ENCODE measurements at regions of chr3 and their contacts with region 1.

Region 1: GRCh38 chr3:45037734-45038455 is 11.8 kb downstream of the CLEC3B start:
- DNase-seq: peak; percentile 84
- H3K4me3 Mint-ChIP-seq: no peak overlapping the region
- H3K27ac Mint-ChIP-seq: no peak overlapping the region
- H3K4me1 Mint-ChIP-seq: peaks cover 42% of the 10 kb centered on the region
- H3K27me3 Mint-ChIP-seq: peaks cover 30% of the 10 kb centered on the region

Region 2: GRCh38 chr3:43953814-43954692 is 1083.8 kb before region 1 on chr3:
- intact Hi-C with region 1: no loop called
- DNase-seq: no peak
- H3K4me3 Mint-ChIP-seq: no peak overlapping the region
- H3K27ac Mint-ChIP-seq: no peak overlapping the region
- H3K4me1 Mint-ChIP-seq: peaks cover 13% of the 10 kb centered on the region
- H3K27me3 Mint-ChIP-seq: peaks cover 23% of the 10 kb centered on the region

Region 3: DNA sequence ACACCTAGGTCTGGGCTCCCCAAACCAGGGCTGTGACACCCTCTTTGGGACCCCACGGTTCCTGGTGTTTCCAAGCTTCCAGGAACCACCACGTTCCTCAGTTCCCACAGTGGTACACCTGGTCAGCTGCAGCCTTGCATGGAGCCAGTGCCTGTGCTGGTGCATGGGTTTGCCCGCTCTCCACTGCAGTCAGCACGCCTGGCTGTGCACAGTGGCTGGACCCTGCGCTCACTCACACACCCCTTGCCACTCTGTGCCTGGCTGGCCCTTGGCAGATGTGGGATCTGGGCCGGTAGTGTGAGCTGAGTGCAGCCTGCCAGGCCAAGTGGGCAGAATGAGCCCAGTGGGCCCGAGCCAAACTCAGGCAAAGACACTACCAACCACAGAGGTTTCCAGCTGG is 650.5 kb before region 1 on chr3:
- intact Hi-C with region 1: no loop called
- DNase-seq: no peak
- H3K4me3 Mint-ChIP-seq: no peak overlapping the region
- H3K27ac Mint-ChIP-seq: no peak overlapping the region
- H3K4me1 Mint-ChIP-seq: no peaks in the 10 kb centered on the region
- H3K27me3 Mint-ChIP-seq: no peaks in the 10 kb centered on the region

Region 4: DNA sequence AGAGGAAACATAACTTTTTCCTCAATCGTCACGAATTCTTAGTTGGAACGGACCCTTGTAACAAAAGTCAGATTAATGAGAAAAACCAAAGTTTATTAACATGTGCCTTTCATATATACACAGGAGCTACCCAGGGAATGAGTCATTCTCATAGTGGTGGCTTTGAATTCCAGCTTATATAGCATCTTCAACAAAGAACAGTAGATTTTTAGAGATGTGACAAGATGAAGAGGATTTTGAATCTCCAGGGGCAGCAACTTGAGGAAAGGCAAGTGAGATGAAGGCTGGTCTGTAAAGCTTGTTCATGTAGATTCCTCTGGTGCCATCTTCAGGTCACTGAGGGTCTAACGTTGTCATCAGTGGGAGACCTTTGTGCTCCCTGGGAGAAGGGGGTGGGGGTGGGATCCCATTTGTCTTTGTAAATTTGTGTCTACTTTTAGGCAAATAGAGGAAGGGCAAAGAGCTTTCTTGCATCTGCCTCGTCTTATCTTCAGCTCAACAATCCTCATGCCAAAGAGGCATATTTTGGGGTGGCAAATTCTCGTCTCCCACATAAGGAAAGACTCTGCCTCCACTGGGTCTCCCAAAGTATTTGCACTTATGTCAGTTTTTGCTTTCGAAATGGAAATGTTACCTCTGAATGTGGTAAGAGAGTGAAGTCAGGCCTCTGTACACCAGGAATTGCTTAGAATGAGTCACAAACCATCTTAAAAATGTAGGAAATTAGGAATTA is 17.7 kb after region 1 on chr3:
- intact Hi-C with region 1: loop called (anchors 2 kb)
- DNase-seq: no peak
- H3K4me3 Mint-ChIP-seq: no peak overlapping the region
- H3K27ac Mint-ChIP-seq: no peak overlapping the region
- H3K4me1 Mint-ChIP-seq: peaks cover 30% of the 10 kb centered on the region
- H3K27me3 Mint-ChIP-seq: peaks cover 9% of the 10 kb centered on the region

Region 5: GRCh38 chr3:45123030-45123429 is 85.1 kb after region 1 on chr3:
- intact Hi-C with region 1: no loop called
- DNase-seq: no peak
- H3K4me3 Mint-ChIP-seq: no peak overlapping the region
- H3K27ac Mint-ChIP-seq: no peak overlapping the region
- H3K4me1 Mint-ChIP-seq: peaks cover 35% of the 10 kb centered on the region
- H3K27me3 Mint-ChIP-seq: peaks cover 54% of the 10 kb centered on the region

Region 6: DNA sequence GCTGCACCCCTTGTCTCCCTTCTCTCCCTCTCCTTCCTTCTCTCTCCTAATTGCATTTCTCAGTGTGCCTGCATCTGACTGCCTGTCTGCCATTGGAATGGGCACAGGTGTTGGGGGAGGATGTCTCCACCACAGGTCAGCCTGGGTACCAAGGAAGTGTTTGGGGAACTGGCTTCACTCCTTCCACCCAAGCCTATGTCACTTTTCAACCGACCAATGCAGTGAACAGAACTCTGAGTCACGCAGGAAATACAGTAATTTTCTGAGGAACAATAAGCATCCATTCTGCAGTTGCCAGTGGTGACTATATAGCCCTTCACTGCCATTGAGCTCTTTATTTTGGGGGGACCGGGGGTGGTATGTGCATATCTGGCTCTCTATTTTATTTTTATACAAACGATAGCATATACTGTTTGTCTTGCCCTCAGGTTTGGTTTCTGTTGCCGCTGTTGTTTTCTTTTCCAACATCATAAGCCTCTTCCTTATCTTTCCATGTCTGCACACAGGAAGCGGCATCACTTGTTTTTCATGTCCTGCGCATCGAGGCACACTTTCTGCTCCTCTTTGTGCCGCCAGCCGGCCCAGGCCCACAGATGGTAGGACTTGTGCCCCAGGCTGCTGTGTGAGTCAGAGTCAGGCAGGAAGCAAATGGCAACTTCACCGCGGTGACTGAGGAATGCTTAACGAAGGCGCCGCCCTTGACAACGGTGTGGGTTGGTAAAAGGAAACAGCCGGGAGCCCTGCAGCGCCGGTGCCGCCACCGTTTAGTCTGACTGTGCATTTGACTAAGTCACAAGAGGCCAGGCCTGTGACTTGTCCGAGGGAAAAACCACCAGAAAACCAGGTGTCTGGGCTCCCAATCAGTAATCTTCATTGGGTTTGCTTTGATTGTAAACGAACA is 129.4 kb after region 1 on chr3:
- intact Hi-C with region 1: loop called (anchors 1 kb)
- DNase-seq: peak; percentile 76
- H3K4me3 Mint-ChIP-seq: peak overlapping the region; percentile 72
- H3K27ac Mint-ChIP-seq: peak overlapping the region; percentile 93
- H3K4me1 Mint-ChIP-seq: peaks cover 44% of the 10 kb centered on the region
- H3K27me3 Mint-ChIP-seq: peaks cover 4% of the 10 kb centered on the region

Region 7: DNA sequence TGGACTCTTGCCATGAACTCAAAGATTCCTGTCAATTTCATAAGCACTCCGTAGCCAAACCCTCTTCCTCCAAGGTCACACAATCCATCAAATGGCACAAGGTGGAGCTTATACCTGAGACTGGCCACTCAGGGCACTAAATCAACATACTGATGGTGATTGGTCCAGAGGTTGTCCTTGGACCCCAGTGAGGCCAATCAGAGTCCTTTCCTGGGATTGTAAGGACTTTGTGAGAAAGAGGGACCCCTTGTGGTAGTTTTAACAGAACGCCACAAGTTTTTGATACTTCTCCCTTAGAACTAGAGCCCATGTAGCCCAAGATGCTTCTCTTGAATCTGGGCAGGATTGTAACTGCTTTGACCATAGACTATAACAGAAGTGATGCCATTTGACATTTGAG is 306.1 kb after region 1 on chr3:
- intact Hi-C with region 1: loop called (anchors 1 kb)
- DNase-seq: no peak
- H3K4me3 Mint-ChIP-seq: no peak overlapping the region
- H3K27ac Mint-ChIP-seq: no peak overlapping the region
- H3K4me1 Mint-ChIP-seq: no peaks in the 10 kb centered on the region
- H3K27me3 Mint-ChIP-seq: peaks cover 26% of the 10 kb centered on the region

Region 8: GRCh38 chr3:45507820-45508317 is 470.0 kb after region 1 on chr3:
- intact Hi-C with region 1: loop called (anchors 1 kb)
- DNase-seq: no peak
- H3K4me3 Mint-ChIP-seq: no peak overlapping the region
- H3K27ac Mint-ChIP-seq: no peak overlapping the region
- H3K4me1 Mint-ChIP-seq: peaks cover 13% of the 10 kb centered on the region
- H3K27me3 Mint-ChIP-seq: no peaks in the 10 kb centered on the region

Region 9: GRCh38 chr3:45915518-45916231 is 877.8 kb after region 1 on chr3:
- intact Hi-C with region 1: loop called (anchors 5 kb)
- DNase-seq: peak; percentile 65
- H3K4me3 Mint-ChIP-seq: peak overlapping the region; percentile 58
- H3K27ac Mint-ChIP-seq: peak overlapping the region; percentile 83
- H3K4me1 Mint-ChIP-seq: peaks cover 33% of the 10 kb centered on the region
- H3K27me3 Mint-ChIP-seq: peaks cover 30% of the 10 kb centered on the region

Region 10: GRCh38 chr3:45968706-45969105 is 930.8 kb after region 1 on chr3:
- intact Hi-C with region 1: no loop called
- DNase-seq: no peak
- H3K4me3 Mint-ChIP-seq: no peak overlapping the region
- H3K27ac Mint-ChIP-seq: no peak overlapping the region
- H3K4me1 Mint-ChIP-seq: peaks cover 100% of the 10 kb centered on the region
- H3K27me3 Mint-ChIP-seq: no peaks in the 10 kb centered on the region